ENCODE measurements at regions of chr19 and their contacts with region 1.

Region 1: GRCh38 chr19:30682999-30683536 is 310.9 kb downstream of the ZNF536 start:
- H3K4me3 ChIP-seq: no peak overlapping the region
- H3K27ac ChIP-seq: no peak overlapping the region
- H3K4me1 ChIP-seq: peaks cover 3% of the 10 kb centered on the region; the same call in 1 of the 2 replicates
- CTCF ChIP-seq: peak; percentile 90

Region 2: DNA sequence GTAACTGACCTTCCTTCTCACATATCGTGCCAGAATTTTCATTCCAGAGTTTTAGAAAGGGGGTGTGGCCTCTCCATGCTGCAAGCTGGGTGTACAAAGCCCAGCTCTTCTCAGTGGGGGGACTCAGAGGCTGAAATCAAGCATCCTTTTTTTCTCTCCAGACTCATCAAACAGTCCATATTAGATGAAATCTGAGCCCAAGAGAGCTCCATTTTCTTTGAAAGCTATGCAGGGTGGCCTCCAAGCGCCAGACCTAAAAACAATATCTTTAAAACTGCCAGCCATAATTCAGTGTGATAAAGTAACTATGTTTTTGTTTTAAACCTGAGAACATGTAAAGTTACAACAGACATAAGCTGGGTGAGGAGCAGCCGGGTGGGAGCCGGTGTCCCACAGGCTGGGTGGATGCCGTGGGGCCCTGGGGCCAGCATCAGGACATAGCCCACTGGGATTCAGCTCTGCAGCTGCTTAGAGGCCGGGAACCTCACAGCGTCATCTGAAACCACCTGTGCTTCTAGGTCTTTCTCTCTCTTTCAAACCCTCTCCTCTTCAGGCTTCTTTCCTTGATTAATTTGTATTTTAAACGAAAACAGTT is 61.6 kb before region 1 on chr19:
- CTCF ChIA-PET with region 1: no interaction called
- POLR2A ChIA-PET with region 1: no interaction called
- H3K4me3 ChIP-seq: no peak overlapping the region
- H3K27ac ChIP-seq: no peak overlapping the region
- H3K4me1 ChIP-seq: peaks cover 13% of the 10 kb centered on the region
- CTCF ChIP-seq: no peak

Region 3: GRCh38 chr19:30703173-30703572 is 20.1 kb after region 1 on chr19:
- CTCF ChIA-PET with region 1: interaction called, 29 read pairs
- POLR2A ChIA-PET with region 1: no interaction called
- H3K4me3 ChIP-seq: no peak overlapping the region
- H3K27ac ChIP-seq: no peak overlapping the region
- H3K4me1 ChIP-seq: peaks cover 3% of the 10 kb centered on the region; the same call in 1 of the 2 replicates
- CTCF ChIP-seq: no peak

Region 4: GRCh38 chr19:30778061-30778460 is 95.0 kb after region 1 on chr19:
- CTCF ChIA-PET with region 1: interaction called, 10 read pairs
- POLR2A ChIA-PET with region 1: no interaction called
- H3K4me3 ChIP-seq: no peak overlapping the region
- H3K27ac ChIP-seq: no peak overlapping the region
- H3K4me1 ChIP-seq: no peaks in the 10 kb centered on the region
- CTCF ChIP-seq: no peak

Region 5: GRCh38 chr19:30799865-30800755 is 117.0 kb after region 1 on chr19:
- CTCF ChIA-PET with region 1: interaction called, 13 read pairs
- POLR2A ChIA-PET with region 1: no interaction called
- H3K4me3 ChIP-seq: no peak overlapping the region
- H3K27ac ChIP-seq: no peak overlapping the region
- H3K4me1 ChIP-seq: no peaks in the 10 kb centered on the region; the same call in 1 of the 2 replicates
- CTCF ChIP-seq: peak; percentile 91

Region 6: DNA sequence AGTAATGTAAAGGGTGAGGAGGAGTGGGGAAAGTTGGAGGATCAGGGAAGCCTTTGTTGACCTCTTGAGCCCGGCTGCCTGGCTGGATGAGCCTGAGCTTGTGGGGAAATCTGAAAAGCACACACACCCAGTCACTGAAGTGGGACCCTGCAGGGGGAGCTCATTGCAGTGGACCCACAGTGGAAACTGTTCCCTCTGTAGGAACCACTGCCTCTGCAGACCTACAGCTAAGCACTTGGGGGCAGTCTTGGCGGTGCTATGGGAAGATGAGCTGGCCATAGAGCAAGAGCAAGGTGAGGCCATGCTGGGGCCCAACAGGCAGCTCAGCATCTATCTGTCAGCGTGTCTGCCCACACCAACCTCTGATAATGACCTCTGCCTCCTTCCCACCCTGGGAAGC is 371.4 kb after region 1 on chr19:
- CTCF ChIA-PET with region 1: interaction called, 19 read pairs
- POLR2A ChIA-PET with region 1: no interaction called
- H3K4me3 ChIP-seq: no peak overlapping the region
- H3K27ac ChIP-seq: no peak overlapping the region
- H3K4me1 ChIP-seq: no peaks in the 10 kb centered on the region
- CTCF ChIP-seq: peak; percentile 78